ENCODE measurements at regions of chr12 and their contacts with region 1.

Region 1: GRCh38 chr12:113980537-113981337 is 14.6 kb upstream of the RBM19 start:
- DNase-seq: peak; percentile 56
- H3K4me3 Mint-ChIP-seq: no peak overlapping the region
- H3K27ac Mint-ChIP-seq: no peak overlapping the region
- H3K4me1 Mint-ChIP-seq: no peaks in the 10 kb centered on the region
- H3K27me3 Mint-ChIP-seq: peaks cover 17% of the 10 kb centered on the region

Region 2: GRCh38 chr12:113965951-113966797 is 14.6 kb before region 1 on chr12 and contains the start of gene RBM19:
- CTCF ChIA-PET with region 1: interaction called, 11 read pairs
- DNase-seq: peak; percentile 98
- H3K4me3 Mint-ChIP-seq: peak within 1 kb of the TSS; percentile 98
- H3K27ac Mint-ChIP-seq: peak within 1 kb of the TSS; percentile 90
- H3K4me1 Mint-ChIP-seq: peaks cover 55% of the 10 kb centered on the region
- H3K27me3 Mint-ChIP-seq: no peaks in the 10 kb centered on the region

Region 3: DNA sequence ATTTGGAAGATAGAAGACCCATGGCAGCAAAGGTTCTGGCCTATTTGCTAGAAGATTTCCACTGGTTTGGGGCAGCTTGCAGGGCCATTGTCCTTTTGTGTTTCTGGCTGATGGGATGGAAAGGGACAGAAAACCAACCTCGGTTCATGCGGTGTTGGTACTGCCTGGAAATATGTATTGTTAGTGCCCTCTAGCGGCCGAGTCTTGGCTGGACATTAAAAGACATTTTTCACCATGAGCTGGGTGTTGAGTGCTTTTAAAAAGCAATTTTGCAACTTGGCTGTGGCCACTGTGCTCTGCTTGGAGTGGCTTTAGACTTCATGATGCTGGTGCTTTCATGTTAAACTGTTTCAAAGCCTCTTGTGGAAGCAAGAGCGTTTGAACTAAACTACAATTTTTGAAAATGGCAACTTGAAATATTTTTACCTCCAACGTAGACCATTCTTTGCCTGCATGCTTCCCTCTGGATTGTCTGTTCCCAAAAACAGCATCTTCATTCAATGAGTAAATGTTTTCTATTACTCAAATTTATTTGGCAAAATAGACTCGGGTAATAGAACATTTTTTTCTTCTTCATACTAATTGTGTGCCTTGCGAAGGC is 527.9 kb after region 1 on chr12:
- CTCF ChIA-PET with region 1: interaction called, 36 read pairs
- DNase-seq: peak; percentile 74
- H3K4me3 Mint-ChIP-seq: no peak overlapping the region
- H3K27ac Mint-ChIP-seq: no peak overlapping the region
- H3K4me1 Mint-ChIP-seq: no peaks in the 10 kb centered on the region
- H3K27me3 Mint-ChIP-seq: peaks cover 4% of the 10 kb centered on the region

Measured in activated naive CD4-positive, alpha-beta T cell treated with anti-CD3 and anti-CD28 coated beads, Interleukin-2, amount 10 ng/mL, durations not matched to agents 7 days and 5 days (primary cell).